HCT116 (cell line): ENCODE measurements at regions of chr9 and their contacts with region 1.

Region 1: GRCh38 chr9:133149126-133150107 is 14.3 kb downstream of the GBGT1 start:
- DNase-seq: peak; percentile 89
- ATAC-seq: peak; percentile 79
- H3K4me3 ChIP-seq: peak overlapping the region; percentile 73 to 94
- H3K27ac ChIP-seq: peak overlapping the region; percentile 93
- H3K4me1 ChIP-seq: peaks cover 16 to 43% of the 10 kb centered on the region in 2 experiments
- H3K27me3 ChIP-seq: no peaks in the 10 kb centered on the region
- CTCF ChIP-seq: peak in 2 of 3 experiments; percentile 6 to 37; a peak in 1 of 6 replicates
- POLR2A ChIP-seq: peak; percentile 60
- RAD21 ChIP-seq: no peak

Region 2: GRCh38 chr9:133121198-133121939 is 28.0 kb before region 1 on chr9 and contains the start of gene RALGDS:
- CTCF ChIA-PET with region 1: interaction called, 20 read pairs
- POLR2A ChIA-PET with region 1: no interaction called
- RAD21 ChIA-PET with region 1: interaction called in 1 of 2 experiments, 3 read pairs
- intact Hi-C with region 1: loop called (anchors 2 kb)
- DNase-seq: peak; percentile 56
- ATAC-seq: peak; percentile 87
- H3K4me3 ChIP-seq: peak within 1 kb of the TSS; percentile 62 to 80
- H3K27ac ChIP-seq: peak within 1 kb of the TSS; percentile 79
- H3K4me1 ChIP-seq: peaks cover 10 to 37% of the 10 kb centered on the region in 2 experiments
- H3K27me3 ChIP-seq: no peaks in the 10 kb centered on the region
- CTCF ChIP-seq: no peak
- POLR2A ChIP-seq: no peak
- RAD21 ChIP-seq: no peak
- total RNA-seq, gene RALGDS: 36.1 TPM

Region 3: DNA sequence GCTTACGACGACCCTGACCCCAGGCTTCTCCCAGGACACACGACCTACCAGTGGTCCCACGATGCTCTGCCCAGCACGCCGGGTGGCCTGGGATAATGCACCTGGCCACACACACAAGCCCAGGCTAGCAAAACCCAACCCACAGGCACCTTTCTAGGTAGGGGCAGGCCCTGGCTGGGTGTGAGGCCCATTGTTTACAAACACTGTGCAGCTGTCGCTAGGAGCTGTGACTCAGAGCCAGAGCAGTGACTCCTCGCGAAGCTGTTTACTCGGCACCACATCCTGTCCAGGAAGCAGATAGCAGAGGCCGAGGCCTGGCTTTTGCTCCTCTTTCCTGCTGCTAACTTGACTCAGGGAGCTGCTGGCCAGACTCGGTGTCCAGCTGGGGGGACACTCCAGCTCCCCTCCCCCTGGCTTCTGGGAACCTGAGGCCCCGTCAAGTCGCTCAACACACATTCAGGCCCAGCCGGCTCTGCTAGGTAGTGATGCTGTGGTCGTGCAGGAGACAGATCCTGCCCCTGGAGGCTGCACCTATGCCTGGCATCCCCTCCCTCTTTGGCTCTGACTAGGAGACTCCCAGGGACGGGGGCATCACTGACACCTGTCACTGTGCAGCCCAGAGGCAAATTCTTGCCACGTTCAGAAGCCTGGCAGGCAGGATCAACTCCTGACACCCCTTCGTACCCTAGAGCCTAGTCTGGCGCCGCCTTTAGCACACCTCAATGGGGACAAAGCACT is 15.6 kb before region 1 on chr9:
- CTCF ChIA-PET with region 1: interaction called, 61 read pairs
- POLR2A ChIA-PET with region 1: interaction called, 4 read pairs
- RAD21 ChIA-PET with region 1: interaction called, 3 to 4 read pairs
- intact Hi-C with region 1: no loop called
- DNase-seq: peak; percentile 89
- ATAC-seq: peak; percentile 79
- H3K4me3 ChIP-seq: peak overlapping the region; percentile 11 to 21; a peak in 2 of 4 replicates
- H3K27ac ChIP-seq: peak overlapping the region; percentile 82
- H3K4me1 ChIP-seq: peaks cover 42 to 68% of the 10 kb centered on the region in 2 experiments
- H3K27me3 ChIP-seq: no peaks in the 10 kb centered on the region
- CTCF ChIP-seq: peak in 1 of 3 experiments; percentile 15; a peak in 1 of 6 replicates
- POLR2A ChIP-seq: no peak
- RAD21 ChIP-seq: no peak